ENCODE measurements at regions of chr11 and their contacts with region 1.

Region 1: GRCh38 chr11:72598906-72599305 is 75.3 kb downstream of the PDE2A start:
- DNase-seq: no peak

Region 2: DNA sequence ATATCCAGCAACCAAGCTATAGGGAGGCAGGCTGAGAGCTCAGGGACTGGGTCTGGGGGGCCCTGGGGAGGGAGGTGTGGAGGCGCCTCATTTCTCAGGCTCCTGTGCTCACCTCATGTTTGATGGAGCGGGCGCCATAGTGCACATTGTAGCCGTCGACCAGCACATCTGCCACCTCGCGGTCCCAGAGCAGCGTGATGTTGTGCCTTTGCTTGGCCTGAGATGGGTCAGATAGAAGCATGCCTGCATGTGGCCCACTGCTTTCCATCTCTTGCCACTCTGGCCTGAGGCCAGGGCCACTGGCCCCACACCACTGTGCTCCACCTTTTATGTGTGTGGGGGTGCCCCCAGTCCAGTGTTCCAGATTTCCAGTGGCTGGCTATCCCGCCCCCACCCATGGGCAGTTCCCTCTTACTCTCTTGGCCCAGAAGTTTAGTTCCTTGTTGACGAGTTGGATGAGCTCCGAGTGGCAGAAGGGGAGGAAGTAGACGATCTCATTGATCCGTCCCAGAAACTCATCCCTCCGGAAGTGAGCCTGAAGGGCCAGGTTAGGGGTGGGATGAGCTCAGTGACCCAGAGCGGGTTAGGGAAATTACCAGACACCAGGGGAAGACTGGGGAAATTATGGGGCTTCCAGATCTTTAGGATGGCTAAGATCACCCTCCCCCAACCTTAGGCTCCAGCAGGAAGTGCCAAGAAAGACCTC is 304.8 kb before region 1 on chr11:
- intact Hi-C with region 1: no loop called
- DNase-seq: no peak

Region 3: GRCh38 chr11:72642884-72643511 is 44.1 kb after region 1 on chr11:
- intact Hi-C with region 1: loop called in 1 of 2 experiments (anchors 2 kb)
- DNase-seq: peak; percentile 89

Measured in posterior vena cava (tissue), 2 donors.